PC-3 (cell line): ENCODE measurements at regions of chr2 and their contacts with region 1.

Region 1: DNA sequence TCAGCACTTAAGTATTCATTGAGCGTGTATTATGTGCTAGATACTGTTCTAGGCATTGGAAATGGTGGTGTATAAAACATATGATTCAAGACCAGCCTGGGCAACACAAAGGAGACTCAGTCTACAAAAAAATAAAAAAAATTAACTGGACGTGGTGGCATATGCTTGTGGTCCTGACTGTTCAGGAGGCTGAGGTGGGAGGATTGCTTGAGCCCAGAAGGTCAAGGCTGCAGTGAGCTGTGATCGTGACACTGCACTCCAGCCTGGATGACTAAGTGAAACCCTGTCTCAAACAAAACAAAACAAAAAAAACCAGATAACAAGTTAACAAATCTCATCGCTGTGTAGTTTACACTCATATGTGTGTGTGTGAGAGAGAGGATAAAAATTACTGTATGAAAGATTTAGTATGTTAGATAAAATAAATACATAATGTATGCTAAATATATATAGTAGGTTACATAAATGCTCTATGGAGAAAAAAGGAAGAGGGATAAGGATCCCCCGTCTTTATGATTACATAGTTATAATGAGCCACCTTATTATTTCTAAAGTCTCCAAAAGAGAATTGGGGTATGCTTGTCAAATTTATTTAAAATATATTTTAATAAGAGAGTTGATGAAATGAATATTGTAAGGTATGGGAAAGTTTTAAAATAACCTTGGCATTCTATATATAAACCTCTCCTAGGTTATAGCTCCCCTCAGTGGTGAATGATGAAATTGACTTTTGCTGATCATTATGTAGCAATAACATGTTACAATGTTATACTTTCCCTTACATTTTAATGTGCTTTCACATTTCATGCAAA is 69.2 kb downstream of the EHBP1 start:
- DNase-seq: peak; percentile 80
- ATAC-seq: peak; percentile 81
- H3K4me3 ChIP-seq: no peak overlapping the region
- H3K27ac ChIP-seq: peak overlapping the region; percentile 31
- H3K4me1 ChIP-seq: peaks cover 14% of the 10 kb centered on the region
- H3K27me3 ChIP-seq: no peaks in the 10 kb centered on the region
- CTCF ChIP-seq: peak; percentile 80

Region 2: GRCh38 chr2:61993444-61994024 is 781.2 kb before region 1 on chr2:
- CTCF ChIA-PET with region 1: no interaction called
- POLR2A ChIA-PET with region 1: no interaction called
- intact Hi-C with region 1: loop called (anchors 5 kb)
- DNase-seq: peak; percentile 68
- ATAC-seq: peak; percentile 80
- H3K4me3 ChIP-seq: no peak overlapping the region
- H3K27ac ChIP-seq: no peak overlapping the region
- H3K4me1 ChIP-seq: no peaks in the 10 kb centered on the region
- H3K27me3 ChIP-seq: no peaks in the 10 kb centered on the region
- CTCF ChIP-seq: peak; percentile 89

Region 3: GRCh38 chr2:62456721-62457539 is 317.8 kb before region 1 on chr2:
- CTCF ChIA-PET with region 1: interaction called, 15 read pairs
- POLR2A ChIA-PET with region 1: no interaction called
- intact Hi-C with region 1: loop called (anchors 1 kb)
- DNase-seq: peak; percentile 85
- ATAC-seq: peak; percentile 84
- H3K4me3 ChIP-seq: peak overlapping the region; percentile 80
- H3K27ac ChIP-seq: peak overlapping the region; percentile 67
- H3K4me1 ChIP-seq: peaks cover 24% of the 10 kb centered on the region
- H3K27me3 ChIP-seq: no peaks in the 10 kb centered on the region
- CTCF ChIP-seq: peak; percentile 92

Region 4: DNA sequence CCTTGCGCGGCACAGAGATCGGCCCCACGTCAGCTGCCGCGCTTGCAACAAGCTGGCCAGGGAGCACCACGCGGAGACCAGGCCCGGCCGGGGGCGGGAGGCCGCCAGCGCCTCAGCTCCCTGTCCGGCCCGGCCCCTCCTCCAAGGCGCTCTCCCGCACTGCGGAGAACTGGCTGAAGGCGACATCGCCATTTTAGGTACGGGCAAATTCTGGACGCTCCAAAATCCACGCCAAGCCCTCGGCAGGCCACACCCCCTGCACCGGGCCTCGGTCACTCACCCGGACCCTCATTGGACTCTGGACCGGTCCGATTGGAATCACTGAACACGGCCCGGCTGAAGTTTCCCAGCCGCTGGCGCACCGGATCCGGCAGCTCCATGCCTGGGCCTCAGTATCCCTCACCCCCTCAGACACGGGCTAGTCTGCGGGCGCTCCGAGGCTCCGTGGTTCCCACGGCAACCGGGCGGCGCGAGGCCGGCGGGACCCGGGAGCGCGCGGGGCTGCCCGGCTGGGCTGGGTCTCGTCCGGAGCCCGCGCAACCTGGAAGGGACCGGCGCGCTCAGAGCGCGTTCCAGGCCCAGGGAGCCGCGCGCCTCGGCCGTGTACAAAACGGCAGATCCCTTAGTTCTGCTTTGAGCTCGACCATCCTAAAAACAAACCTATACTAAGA is 268.9 kb before region 1 on chr2 and contains the start of gene TMEM17:
- CTCF ChIA-PET with region 1: interaction called, 3 read pairs
- POLR2A ChIA-PET with region 1: no interaction called
- intact Hi-C with region 1: loop called (anchors 1 kb)
- DNase-seq: peak; percentile 94
- ATAC-seq: peak; percentile 90
- H3K4me3 ChIP-seq: peak within 1 kb of the TSS; percentile 77
- H3K27ac ChIP-seq: peak within 1 kb of the TSS; percentile 72
- H3K4me1 ChIP-seq: peaks cover 7% of the 10 kb centered on the region; the same call in 1 of the 2 replicates
- H3K27me3 ChIP-seq: no peaks in the 10 kb centered on the region
- CTCF ChIP-seq: no peak
- total RNA-seq, gene TMEM17: 1.6 and 2.9 TPM in 2 replicates

Region 5: GRCh38 chr2:62705007-62705829 is 69.5 kb before region 1 on chr2 and contains the start of gene EHBP1:
- CTCF ChIA-PET with region 1: no interaction called
- POLR2A ChIA-PET with region 1: no interaction called
- intact Hi-C with region 1: loop called (anchors 1 kb)
- DNase-seq: peak; percentile 99
- ATAC-seq: peak; percentile 91
- H3K4me3 ChIP-seq: peak within 1 kb of the TSS; percentile 76
- H3K27ac ChIP-seq: peak within 1 kb of the TSS; percentile 35
- H3K4me1 ChIP-seq: peaks cover 42% of the 10 kb centered on the region
- H3K27me3 ChIP-seq: no peaks in the 10 kb centered on the region
- CTCF ChIP-seq: no peak
- total RNA-seq, gene EHBP1: 25.7 and 35.1 TPM in 2 replicates